HEK293T (cell line): ENCODE measurements at regions of chr9 and their contacts with region 1.

Region 1: GRCh38 chr9:22452415-22453010 is 5.9 kb downstream of the DMRTA1 start:
- DNase-seq: peak; percentile 17

Region 2: DNA sequence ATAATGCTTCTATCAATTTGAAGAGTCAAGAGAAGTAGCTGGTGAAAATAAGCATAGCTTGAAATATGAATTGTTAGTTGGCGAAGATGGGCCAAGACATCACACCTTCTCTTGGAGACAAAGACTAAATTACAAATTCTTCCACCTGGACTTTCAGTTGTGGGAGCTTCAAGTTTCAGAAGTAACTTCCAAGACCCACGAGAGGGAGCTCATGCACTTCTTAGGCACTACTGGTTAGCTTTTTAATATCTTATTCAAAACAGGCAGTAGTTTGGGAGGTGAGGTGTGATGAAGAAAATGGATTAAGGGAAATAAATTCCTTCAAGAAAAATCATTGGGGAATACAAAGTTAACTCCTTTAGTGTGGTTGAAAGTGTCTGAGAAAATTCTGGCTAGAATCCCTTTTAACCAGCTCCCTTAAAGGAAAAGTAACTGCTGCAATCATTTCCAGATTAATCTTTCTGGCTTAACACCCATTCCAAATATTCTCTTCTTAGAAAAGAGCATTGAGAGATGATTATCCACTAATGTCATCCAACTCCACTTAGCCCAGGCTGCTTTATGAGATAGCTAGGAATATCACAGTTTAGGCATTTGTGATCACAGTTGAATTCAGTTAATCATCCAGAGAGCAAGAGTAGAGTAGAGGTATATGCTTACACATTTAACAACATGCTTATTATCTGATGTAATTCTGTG is 145.4 kb before region 1 on chr9:
- CTCF ChIA-PET with region 1: interaction called, 12 read pairs
- POLR2A ChIA-PET with region 1: no interaction called
- DNase-seq: peak; percentile 56

Region 3: DNA sequence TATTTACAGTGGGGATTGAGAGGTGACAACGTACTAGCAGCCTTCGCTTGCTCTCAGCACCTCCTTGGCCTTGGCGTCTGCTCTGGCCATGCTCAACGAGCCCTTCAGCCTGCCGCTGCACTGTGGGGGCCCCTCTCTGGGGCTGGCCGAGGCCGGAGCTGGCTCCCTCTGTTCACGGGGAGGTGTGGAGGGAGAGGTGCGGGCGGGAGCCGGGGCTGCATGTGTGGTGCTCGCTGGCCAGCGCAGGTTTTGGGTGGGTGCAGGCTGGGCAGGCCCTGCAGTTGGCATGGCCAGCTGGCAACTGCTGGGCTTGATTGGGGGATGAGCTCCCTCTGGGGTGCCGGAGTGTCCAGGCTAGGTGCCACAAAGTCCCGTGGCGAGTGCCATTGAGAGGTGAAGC is 11.7 kb before region 1 on chr9:
- CTCF ChIA-PET with region 1: no interaction called
- POLR2A ChIA-PET with region 1: no interaction called
- DNase-seq: no peak

Region 4: GRCh38 chr9:22700171-22700570 is 247.7 kb after region 1 on chr9:
- CTCF ChIA-PET with region 1: no interaction called
- POLR2A ChIA-PET with region 1: no interaction called
- DNase-seq: no peak